ENCODE measurements at regions of chr1 and their contacts with region 1.

Region 1: DNA sequence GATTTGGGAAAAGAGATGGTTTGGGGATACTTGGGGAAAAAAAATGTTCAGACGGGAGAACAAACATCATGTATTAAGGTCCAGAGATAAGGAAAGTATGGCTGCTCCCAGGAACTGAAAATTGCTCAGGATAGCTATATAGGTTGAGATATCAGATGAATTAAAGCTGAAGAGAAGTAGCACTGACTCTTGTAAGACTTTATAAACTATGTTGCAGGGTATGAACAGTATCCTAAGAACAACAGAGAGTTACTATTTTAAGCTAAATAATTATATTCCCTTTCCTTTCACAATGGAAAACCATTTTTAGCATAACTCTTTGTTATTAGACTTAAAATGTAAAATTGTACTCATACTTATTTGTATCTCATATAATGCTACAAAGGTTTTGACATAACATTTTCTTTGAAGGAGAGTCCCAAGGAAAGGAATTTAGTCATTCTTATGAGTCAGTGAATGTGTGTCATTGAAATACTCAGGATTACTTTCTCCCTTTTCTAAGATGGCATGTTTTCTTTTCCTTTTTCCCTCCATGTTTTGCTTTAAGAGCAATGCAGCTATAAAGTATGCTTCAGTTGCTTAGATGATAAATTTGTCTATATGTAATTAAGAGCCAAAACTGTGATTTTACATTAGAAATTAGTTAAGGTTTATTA is 139.4 kb upstream of the KIAA1614 start:
- ATAC-seq: peak in 2 of 8 experiments; percentile 33 to 48
- H3K4me3 ChIP-seq: no peak overlapping the region
- H3K27ac ChIP-seq: no peak overlapping the region
- H3K4me1 ChIP-seq: no peaks in the 10 kb centered on the region

Region 2: GRCh38 chr1:180674603-180675530 is 98.5 kb before region 1 on chr1:
- in situ Hi-C with region 1: loop called in 1 of 9 experiments (anchors 25 kb)
- ATAC-seq: peak in 4 of 8 experiments; percentile 18 to 58 (median 32)
- H3K4me3 ChIP-seq: no peak overlapping the region
- H3K27ac ChIP-seq: no peak overlapping the region
- H3K4me1 ChIP-seq: no peaks in the 10 kb centered on the region

Region 3: DNA sequence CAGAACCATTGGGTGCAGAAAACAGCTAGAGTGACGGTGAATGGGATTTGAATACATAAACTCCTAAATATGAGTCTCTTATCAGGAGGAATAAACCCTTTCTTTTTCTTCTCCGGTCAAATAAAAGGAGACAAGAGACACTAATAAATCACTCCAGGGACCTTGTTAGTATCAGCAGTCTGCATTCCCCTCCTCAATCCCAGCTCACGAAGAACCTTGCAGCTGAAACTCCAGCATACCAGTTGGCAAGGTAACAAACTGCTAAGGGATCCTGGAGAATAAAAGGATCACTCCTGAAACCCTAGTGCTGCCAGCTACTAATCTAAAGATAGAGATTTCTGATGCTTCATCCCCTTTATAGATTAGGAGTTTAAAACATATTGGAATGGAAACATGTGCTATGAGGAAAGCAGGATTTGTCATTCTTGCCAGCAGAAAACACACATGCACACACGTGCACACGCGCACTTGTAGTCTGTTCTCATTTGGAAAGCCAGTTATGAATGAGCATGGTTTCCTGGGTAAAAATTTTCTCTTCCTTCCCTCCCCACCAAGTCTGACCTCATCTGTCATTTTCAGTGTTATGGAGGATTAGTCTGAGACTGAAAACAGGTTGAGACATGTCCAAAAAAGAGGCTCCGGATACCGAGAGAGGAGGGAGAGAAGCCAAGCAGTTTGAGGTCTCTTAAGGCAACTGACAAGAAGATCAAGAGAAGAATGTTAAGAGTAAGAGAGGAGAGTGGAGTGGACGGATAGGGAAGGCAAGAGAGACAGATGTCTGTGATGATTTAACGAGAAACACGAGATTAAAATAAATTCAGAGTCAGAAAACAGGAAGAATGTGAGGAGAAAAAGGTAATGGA is 326.0 kb after region 1 on chr1:
- in situ Hi-C with region 1: no loop called
- ATAC-seq: peak in 7 of 8 experiments; percentile 2 to 55 (median 16)
- H3K4me3 ChIP-seq: no peak overlapping the region
- H3K27ac ChIP-seq: no peak overlapping the region
- H3K4me1 ChIP-seq: peaks cover 76 to 77% of the 10 kb centered on the region in 2 donors